HepG2 (cell line): ENCODE measurements at regions of chr2 and their contacts with region 1.

Region 1: DNA sequence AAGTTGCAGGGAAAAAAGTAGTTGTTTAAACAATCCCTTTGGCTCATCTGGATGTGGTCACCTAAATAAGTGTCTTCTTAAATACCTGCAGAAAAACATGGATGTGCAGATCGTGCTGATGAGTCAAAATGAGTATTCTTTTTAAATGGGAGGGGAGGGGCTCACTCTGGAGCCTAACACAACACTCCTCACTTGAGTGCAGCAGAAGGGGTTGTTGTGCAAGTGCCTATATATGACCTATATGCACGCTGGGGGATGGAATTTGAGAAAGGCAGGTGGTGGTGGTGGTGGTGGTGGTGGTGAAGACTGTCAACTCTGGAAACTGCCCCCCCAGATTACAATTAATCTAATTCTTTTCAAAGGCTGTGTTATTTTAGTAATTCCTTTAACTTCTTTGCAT is 77.9 kb upstream of the FAM124B start:
- DNase-seq: no peak
- ATAC-seq: no peak
- H3K4me3 ChIP-seq: no peak overlapping the region
- H3K27ac ChIP-seq: no peak overlapping the region
- H3K4me1 ChIP-seq: peaks cover 2% of the 10 kb centered on the region
- H3K27me3 ChIP-seq: no peaks in the 10 kb centered on the region
- CTCF ChIP-seq: no peak
- EP300 ChIP-seq: no peak
- POLR2A ChIP-seq: no peak
- RAD21 ChIP-seq: no peak

Region 2: GRCh38 chr2:224466304-224466895 is 13.4 kb before region 1 on chr2:
- CTCF ChIA-PET with region 1: no interaction called
- POLR2A ChIA-PET with region 1: interaction called, 5 read pairs
- in situ Hi-C with region 1: no loop called
- intact Hi-C with region 1: loop called (anchors 1 kb)
- DNase-seq: no peak
- ATAC-seq: peak; percentile 62
- H3K4me3 ChIP-seq: no peak overlapping the region
- H3K27ac ChIP-seq: no peak overlapping the region
- H3K4me1 ChIP-seq: no peaks in the 10 kb centered on the region
- H3K27me3 ChIP-seq: no peaks in the 10 kb centered on the region
- CTCF ChIP-seq: no peak
- EP300 ChIP-seq: no peak
- POLR2A ChIP-seq: no peak
- RAD21 ChIP-seq: no peak

Region 3: DNA sequence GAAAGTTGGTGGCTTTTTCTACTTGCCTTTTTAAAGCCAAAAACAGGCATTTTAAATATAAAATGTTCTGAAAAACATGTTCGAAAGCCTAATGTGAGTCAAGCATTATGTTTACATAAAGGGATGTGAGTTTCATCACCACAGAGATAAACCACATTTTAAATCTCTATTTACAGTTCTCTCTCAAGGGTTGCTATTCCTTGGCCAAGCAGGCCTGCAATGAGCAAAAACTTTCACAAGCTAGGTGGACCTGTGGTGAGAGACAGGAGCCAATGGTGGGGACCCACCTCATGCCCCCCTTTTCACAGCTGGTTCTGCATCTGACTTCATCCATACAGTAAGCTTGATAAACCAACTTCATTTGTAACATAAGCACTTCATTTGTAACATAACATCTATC is 40.2 kb after region 1 on chr2:
- CTCF ChIA-PET with region 1: no interaction called
- POLR2A ChIA-PET with region 1: no interaction called
- in situ Hi-C with region 1: no loop called
- intact Hi-C with region 1: no loop called
- DNase-seq: peak; percentile 12
- ATAC-seq: peak; percentile 51
- H3K4me3 ChIP-seq: no peak overlapping the region
- H3K27ac ChIP-seq: no peak overlapping the region
- H3K4me1 ChIP-seq: peaks cover 25% of the 10 kb centered on the region
- H3K27me3 ChIP-seq: no peaks in the 10 kb centered on the region
- CTCF ChIP-seq: no peak
- EP300 ChIP-seq: no peak
- POLR2A ChIP-seq: no peak
- RAD21 ChIP-seq: no peak

Region 4: DNA sequence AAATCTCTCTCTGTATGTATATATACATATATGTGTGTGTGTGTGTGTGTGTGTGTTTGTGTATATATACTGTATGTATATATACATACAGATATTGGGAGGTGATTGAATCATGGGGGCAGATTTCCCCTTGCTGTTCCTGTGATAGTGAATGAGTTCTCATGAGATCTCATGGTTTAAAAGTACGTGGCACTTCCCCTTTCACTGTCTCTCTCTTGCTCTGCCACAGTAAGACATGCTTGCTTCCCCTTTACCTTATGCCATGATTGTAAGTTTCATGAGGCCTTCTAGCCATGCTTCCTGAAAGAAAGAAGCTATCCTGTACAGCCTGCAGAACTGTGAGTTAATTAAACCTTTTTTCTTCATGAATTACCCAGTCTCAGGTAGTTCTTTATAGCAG is 255.1 kb after region 1 on chr2:
- CTCF ChIA-PET with region 1: no interaction called
- POLR2A ChIA-PET with region 1: no interaction called
- in situ Hi-C with region 1: no loop called
- intact Hi-C with region 1: no loop called
- DNase-seq: no peak
- ATAC-seq: no peak
- H3K4me3 ChIP-seq: no peak overlapping the region
- H3K27ac ChIP-seq: no peak overlapping the region
- H3K4me1 ChIP-seq: no peaks in the 10 kb centered on the region
- H3K27me3 ChIP-seq: no peaks in the 10 kb centered on the region
- CTCF ChIP-seq: no peak
- EP300 ChIP-seq: no peak
- POLR2A ChIP-seq: no peak
- RAD21 ChIP-seq: no peak